ENCODE measurements at regions of chr5 and their contacts with region 1.

Region 1: DNA sequence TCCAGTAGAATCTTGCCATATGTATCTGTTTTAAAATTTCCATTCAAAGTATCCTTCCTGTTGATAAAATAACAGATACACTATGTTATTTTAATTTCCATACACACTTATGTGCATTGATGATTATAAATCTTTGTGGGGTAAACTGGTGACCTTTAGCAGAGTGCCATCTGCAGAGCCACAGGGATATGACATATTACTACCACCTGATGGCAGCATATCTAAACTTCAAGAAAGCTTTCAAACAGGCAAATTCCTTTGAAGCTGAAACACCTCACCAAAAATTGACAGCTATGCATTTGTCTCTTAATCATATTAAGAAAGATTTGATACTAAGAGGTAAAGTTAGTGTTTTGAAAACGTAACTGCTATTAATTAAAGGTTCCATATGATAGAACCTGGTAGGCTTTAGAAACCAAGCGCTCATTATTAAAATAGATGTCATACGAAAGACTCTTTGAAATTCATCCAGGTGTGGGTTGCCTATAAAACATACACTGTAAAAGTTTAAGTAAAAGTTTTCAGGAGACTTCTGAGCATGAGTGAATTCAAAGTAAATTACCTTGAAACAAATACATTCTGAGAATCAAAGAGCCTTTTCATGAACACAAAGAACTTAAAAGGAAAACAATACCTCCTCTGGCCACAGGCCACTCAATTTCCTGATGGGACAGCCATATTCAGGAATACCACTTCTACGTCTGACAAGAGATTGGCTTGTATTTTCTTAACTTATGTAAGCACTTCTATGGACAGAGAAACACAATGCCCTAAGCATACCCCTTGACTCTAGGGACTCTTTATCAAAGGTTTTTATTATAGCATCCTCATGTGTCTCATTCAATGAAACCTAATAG is 93.3 kb downstream of the KIAA0825 start:
- DNase-seq: peak; percentile 70
- H3K4me3 ChIP-seq: no peak overlapping the region
- H3K27ac ChIP-seq: no peak overlapping the region
- H3K4me1 ChIP-seq: no peaks in the 10 kb centered on the region
- CTCF ChIP-seq: peak; percentile 93

Region 2: GRCh38 chr5:94849821-94850736 is 325.0 kb after region 1 on chr5:
- CTCF ChIA-PET with region 1: no interaction called
- POLR2A ChIA-PET with region 1: interaction called, 3 read pairs
- intact Hi-C with region 1: loop called (anchors 1 kb)
- DNase-seq: peak; percentile 79
- H3K4me3 ChIP-seq: no peak overlapping the region
- H3K27ac ChIP-seq: no peak overlapping the region
- H3K4me1 ChIP-seq: peaks cover 31% of the 10 kb centered on the region
- CTCF ChIP-seq: peak; percentile 97

Measured in OCI-LY7 (cell line).